Activated T-helper 1 cell treated with anti-CD3 and anti-CD28 coated beads, Interleukin-12 subunit alpha, Interleukin-12 subunit beta, Interleukin-2, Interleukin-4 antibody, amounts not matched to agents 30 ng/mL and 10 ng/mL and 1 ng/mL, durations not matched to agents 14 hours and 24 hours and 36 hours (primary cell): ENCODE measurements at regions of chr17 and their contacts with region 1.

Region 1: DNA sequence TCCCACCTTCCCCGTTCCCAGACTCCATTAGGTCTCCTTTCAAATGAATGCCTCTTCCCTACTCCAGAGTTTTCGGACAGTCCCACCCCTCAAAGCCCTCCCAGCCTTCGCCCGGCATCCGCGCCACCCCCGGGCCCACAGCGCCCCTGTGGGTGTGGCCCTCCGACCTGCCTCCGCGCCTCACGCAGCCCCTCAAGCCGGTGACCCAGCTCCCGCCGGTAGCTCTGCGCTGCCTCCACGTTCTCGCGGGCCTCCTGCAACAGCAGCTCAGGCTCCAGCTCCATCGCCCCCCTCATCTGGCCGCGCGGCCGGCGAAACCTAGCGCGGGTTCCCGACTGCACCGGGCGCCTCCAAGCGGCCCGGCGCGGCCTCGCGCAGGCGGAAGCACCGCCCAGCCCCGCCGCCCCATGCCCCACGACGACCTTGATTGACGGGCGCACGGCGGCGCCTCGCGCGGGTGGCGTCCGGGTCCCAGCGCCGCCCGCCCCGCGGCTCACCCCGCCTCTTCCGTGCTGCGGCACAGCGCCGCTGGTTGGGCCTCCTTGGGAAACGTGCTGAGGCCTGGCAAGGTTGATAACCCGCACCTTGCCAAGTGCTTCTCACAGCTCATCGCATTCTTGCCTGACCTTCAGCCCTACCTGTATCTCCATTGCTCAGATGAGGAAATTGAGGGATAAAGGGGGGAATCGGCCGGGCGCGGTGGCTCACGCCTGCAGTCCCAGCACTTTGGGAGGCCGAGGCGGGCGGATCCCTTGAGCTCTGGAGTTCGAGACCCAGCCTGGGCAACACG is at the start of gene CRLF3:
- DNase-seq: peak; percentile 90
- H3K4me3 Mint-ChIP-seq: peak within 1 kb of the TSS; percentile 100
- H3K27ac Mint-ChIP-seq: peak within 1 kb of the TSS; percentile 89
- H3K4me1 Mint-ChIP-seq: peaks cover 30% of the 10 kb centered on the region
- H3K27me3 Mint-ChIP-seq: no peaks in the 10 kb centered on the region
- total RNA-seq, gene CRLF3: 45.6 and 49.5 TPM in 2 replicates

Region 2: GRCh38 chr17:30378824-30379302 is 445.7 kb before region 1 on chr17 and contains the start of gene CPD:
- intact Hi-C with region 1: loop called (anchors 10 kb)
- DNase-seq: peak; percentile 97
- H3K4me3 Mint-ChIP-seq: peak within 1 kb of the TSS; percentile 92
- H3K27ac Mint-ChIP-seq: peak within 1 kb of the TSS; percentile 97
- H3K4me1 Mint-ChIP-seq: peaks cover 67% of the 10 kb centered on the region
- H3K27me3 Mint-ChIP-seq: no peaks in the 10 kb centered on the region
- total RNA-seq, gene CPD: 29.7 and 35.3 TPM in 2 replicates

Region 3: GRCh38 chr17:30780343-30780742 is 44.2 kb before region 1 on chr17:
- intact Hi-C with region 1: loop called (anchors 1 kb)
- DNase-seq: no peak
- H3K4me3 Mint-ChIP-seq: no peak overlapping the region
- H3K27ac Mint-ChIP-seq: peak overlapping the region; percentile 83
- H3K4me1 Mint-ChIP-seq: peaks cover 14% of the 10 kb centered on the region
- H3K27me3 Mint-ChIP-seq: no peaks in the 10 kb centered on the region

Region 4: GRCh38 chr17:30796016-30796415 is 28.5 kb before region 1 on chr17:
- intact Hi-C with region 1: loop called (anchors 1 kb)
- DNase-seq: no peak
- H3K4me3 Mint-ChIP-seq: no peak overlapping the region
- H3K27ac Mint-ChIP-seq: peak overlapping the region; percentile 80
- H3K4me1 Mint-ChIP-seq: peaks cover 14% of the 10 kb centered on the region
- H3K27me3 Mint-ChIP-seq: no peaks in the 10 kb centered on the region

Region 5: DNA sequence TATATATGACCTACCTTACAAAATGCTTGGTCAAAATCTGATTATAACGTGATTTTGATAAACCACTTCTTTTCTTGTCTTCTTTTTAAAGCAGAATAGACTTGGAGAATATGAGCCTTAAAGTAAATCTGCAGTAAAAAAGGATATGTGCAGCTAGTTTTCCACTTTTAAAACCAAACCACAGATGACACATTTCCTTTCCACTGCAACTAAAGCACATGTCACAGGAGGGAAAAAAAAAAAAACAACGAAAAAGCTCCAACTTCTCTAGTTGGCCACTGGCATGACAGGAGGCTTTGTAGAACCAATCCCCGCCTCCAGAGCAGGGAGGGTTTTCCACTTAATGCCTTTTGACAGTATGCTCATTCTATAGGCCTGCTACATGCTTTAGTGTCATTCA is 496.9 kb after region 1 on chr17 and contains the start of gene EVI2A:
- intact Hi-C with region 1: loop called (anchors 2 kb)
- DNase-seq: peak; percentile 80
- H3K4me3 Mint-ChIP-seq: peak within 1 kb of the TSS; percentile 88
- H3K27ac Mint-ChIP-seq: peak within 1 kb of the TSS; percentile 92
- H3K4me1 Mint-ChIP-seq: peaks cover 46% of the 10 kb centered on the region
- H3K27me3 Mint-ChIP-seq: no peaks in the 10 kb centered on the region
- total RNA-seq, gene EVI2A: 46.3 and 47.9 TPM in 2 replicates